ENCODE measurements at regions of chr12 and their contacts with region 1.

Region 1: DNA sequence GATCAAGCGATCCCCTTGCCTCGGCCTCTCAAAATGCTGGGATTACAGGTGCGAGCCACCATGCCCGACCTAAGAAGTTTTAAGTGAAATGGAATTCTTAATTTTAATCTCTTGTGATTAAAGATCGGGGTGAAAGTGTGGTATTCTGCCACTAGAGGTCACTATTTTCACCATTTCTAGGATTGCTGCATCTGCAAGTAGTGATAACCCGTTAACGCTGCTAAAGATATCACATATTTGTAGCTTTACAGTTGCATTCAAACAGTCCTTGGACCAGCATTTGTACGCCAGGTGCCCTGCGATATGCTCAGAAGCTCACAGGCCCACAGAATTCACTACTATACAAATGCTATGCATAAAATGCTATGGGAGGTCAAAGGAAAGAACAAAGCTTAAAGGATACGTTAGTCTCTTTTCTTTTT is 19.3 kb downstream of the CCDC62 start:
- DNase-seq: peak; percentile 66
- CTCF ChIP-seq: peak; percentile 51

Region 2: GRCh38 chr12:122803937-122804336 is 10.2 kb after region 1 on chr12:
- CTCF ChIA-PET with region 1: interaction called, 33 read pairs
- POLR2A ChIA-PET with region 1: no interaction called
- DNase-seq: no peak
- CTCF ChIP-seq: no peak

Region 3: DNA sequence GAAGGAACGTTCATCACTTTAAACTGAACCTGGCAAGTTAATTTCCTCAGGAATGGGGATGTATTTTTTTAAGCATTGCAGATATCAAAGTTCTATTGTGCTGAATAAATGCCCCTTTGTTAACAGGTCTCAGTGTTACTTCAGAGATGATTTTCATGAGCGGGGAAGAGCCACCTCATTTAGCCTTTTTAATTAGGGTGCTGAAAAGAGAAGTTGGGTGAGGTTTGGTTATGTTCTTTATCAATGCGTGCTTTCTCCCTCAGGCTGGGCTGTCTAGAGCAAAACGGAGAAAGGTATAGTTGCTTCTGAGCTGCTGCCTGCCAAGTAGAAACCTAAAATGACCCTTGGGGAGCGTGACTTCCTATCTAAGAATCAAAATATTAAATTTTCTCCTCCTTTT is 33.6 kb after region 1 on chr12:
- CTCF ChIA-PET with region 1: interaction called, 17 read pairs
- POLR2A ChIA-PET with region 1: no interaction called
- DNase-seq: peak; percentile 36
- CTCF ChIP-seq: no peak

Region 4: GRCh38 chr12:122927756-122928403 is 134.2 kb after region 1 on chr12:
- CTCF ChIA-PET with region 1: interaction called, 10 read pairs
- POLR2A ChIA-PET with region 1: no interaction called
- DNase-seq: no peak
- CTCF ChIP-seq: no peak

Region 5: GRCh38 chr12:123468562-123469185 is 675.0 kb after region 1 on chr12:
- CTCF ChIA-PET with region 1: no interaction called
- POLR2A ChIA-PET with region 1: no interaction called
- DNase-seq: peak; percentile 75
- CTCF ChIP-seq: peak; percentile 47

Measured in GM10248 (cell line).